Body of pancreas (tissue), 4 donors: ENCODE measurements at regions of chr17 and their contacts with region 1.

Region 1: GRCh38 chr17:42322382-42323267 is 34.3 kb downstream of the STAT5A start:
- DNase-seq: peak; percentile 95 to 98 (median 96)
- ATAC-seq: peak; percentile 93
- H3K4me3 ChIP-seq: no peak overlapping the region
- H3K27ac ChIP-seq: peak overlapping the region in 2 of 4 donors; percentile 2 to 32
- H3K4me1 ChIP-seq: peaks cover 10% of the 10 kb centered on the region
- H3K27me3 ChIP-seq: no peaks in the 10 kb centered on the region
- CTCF ChIP-seq: peak; percentile 97 to 100 (median 99)
- POLR2A ChIP-seq: no peak

Region 2: DNA sequence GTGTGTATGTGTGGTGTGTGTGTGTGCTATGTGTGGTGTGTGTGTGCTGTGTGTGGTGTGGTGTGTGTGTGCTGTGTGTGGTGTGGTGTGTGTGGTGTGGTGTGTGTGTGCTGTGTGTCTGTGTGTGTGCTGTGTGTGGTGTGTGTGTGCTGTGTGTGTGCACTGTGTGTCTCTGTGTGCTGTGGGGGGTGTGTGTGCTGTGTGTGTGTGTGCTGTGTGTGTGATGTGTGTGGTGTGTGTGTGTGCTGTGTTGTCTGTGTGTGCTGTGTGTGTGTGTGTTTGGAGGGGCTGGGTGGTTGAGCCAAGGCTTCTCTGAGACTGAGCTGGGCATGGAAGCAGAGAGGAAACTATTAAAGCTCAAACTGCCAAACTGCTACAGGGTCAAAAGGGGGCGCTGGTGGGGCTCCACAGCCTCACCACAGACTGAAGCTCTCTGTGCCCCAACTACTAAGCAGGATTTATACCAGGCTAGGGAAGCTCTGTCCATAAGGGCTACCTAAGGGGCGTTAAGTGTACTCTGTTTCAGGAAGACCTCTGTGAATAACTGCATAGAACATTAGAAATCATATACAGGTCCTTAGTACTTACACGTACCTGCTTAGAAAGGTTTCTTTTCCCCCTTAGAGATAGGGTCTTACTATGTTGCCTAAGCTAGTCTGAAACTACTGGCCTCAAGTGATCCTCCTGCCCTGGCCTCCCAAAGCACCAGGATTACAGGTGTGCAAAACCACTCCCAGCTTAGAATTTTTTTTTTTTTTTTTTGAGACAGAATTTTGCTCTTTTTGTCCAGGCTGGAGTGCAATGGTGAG is 100.5 kb before region 1 on chr17:
- intact Hi-C with region 1: no loop called
- DNase-seq: peak; percentile 30 to 62 (median 44)
- ATAC-seq: peak; percentile 67
- H3K4me3 ChIP-seq: no peak overlapping the region
- H3K27ac ChIP-seq: no peak overlapping the region
- H3K4me1 ChIP-seq: no peaks in the 10 kb centered on the region
- H3K27me3 ChIP-seq: no peaks in the 10 kb centered on the region
- CTCF ChIP-seq: peak in 6 of 7 experiments; percentile 22 to 57 (median 39)
- POLR2A ChIP-seq: no peak

Region 3: GRCh38 chr17:42354956-42355843 is 32.6 kb after region 1 on chr17:
- intact Hi-C with region 1: no loop called
- DNase-seq: no peak
- ATAC-seq: no peak
- H3K4me3 ChIP-seq: no peak overlapping the region
- H3K27ac ChIP-seq: no peak overlapping the region
- H3K4me1 ChIP-seq: peaks cover 14% of the 10 kb centered on the region
- H3K27me3 ChIP-seq: no peaks in the 10 kb centered on the region
- CTCF ChIP-seq: no peak
- POLR2A ChIP-seq: no peak

Region 4: DNA sequence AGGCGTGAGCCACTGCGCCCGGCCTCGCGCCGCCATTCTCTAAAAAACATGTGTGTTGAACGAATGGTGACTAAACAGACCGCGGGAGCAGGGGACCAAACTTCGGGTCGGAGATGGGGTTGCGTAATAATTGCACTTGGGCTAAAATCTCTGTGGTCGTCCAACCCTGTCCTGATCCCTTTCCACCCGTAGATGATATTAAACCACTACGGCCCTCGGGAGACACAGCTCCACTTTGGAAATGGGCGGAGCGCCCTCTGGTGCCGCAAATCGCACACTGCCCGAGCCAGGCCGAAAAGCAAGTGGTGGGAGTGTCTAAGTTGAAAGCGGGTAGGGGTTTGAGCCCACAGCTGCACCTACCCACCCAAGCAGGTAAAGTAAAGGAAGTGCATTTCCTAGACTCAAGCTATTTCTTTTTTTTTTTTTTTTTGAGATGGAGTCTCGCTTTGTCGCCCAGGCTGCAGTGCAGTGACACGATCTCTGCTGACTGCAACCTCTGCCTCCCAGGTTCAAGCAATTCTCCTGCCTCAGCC is 83.4 kb after region 1 on chr17:
- intact Hi-C with region 1: loop called (anchors 5 kb)
- DNase-seq: peak; percentile 82 to 88 (median 86)
- ATAC-seq: peak; percentile 75
- H3K4me3 ChIP-seq: no peak overlapping the region
- H3K27ac ChIP-seq: peak overlapping the region in 1 of 4 donors; percentile 28
- H3K4me1 ChIP-seq: peaks cover 22% of the 10 kb centered on the region
- H3K27me3 ChIP-seq: no peaks in the 10 kb centered on the region
- CTCF ChIP-seq: peak; percentile 82 to 96 (median 94)
- POLR2A ChIP-seq: no peak